Activated CD4-positive, alpha-beta memory T cell treated with anti-CD3 and anti-CD28 coated beads, Interleukin-2, amount 10 ng/mL, durations not matched to agents 7 days and 5 days (primary cell): ENCODE measurements at regions of chr2 and their contacts with region 1.

Region 1: GRCh38 chr2:64653349-64654062 is at the start of gene SERTAD2:
- DNase-seq: peak; percentile 87
- H3K4me3 Mint-ChIP-seq: peak within 1 kb of the TSS; percentile 91
- H3K27ac Mint-ChIP-seq: peak within 1 kb of the TSS; percentile 86
- H3K4me1 Mint-ChIP-seq: peaks cover 48% of the 10 kb centered on the region
- H3K27me3 Mint-ChIP-seq: peaks cover 11% of the 10 kb centered on the region
- total RNA-seq, gene SERTAD2: 16.2 to 17.5 TPM

Region 2: GRCh38 chr2:64598226-64598625 is 55.3 kb before region 1 on chr2:
- CTCF ChIA-PET with region 1: no interaction called
- POLR2A ChIA-PET with region 1: no interaction called
- DNase-seq: no peak
- H3K4me3 Mint-ChIP-seq: no peak overlapping the region
- H3K27ac Mint-ChIP-seq: no peak overlapping the region
- H3K4me1 Mint-ChIP-seq: peaks cover 9% of the 10 kb centered on the region
- H3K27me3 Mint-ChIP-seq: no peaks in the 10 kb centered on the region

Region 3: GRCh38 chr2:64609227-64609941 is 44.1 kb before region 1 on chr2:
- CTCF ChIA-PET with region 1: interaction called, 30 read pairs
- POLR2A ChIA-PET with region 1: interaction called, 32 read pairs
- DNase-seq: peak; percentile 73
- H3K4me3 Mint-ChIP-seq: peak overlapping the region; percentile 66
- H3K27ac Mint-ChIP-seq: no peak overlapping the region
- H3K4me1 Mint-ChIP-seq: peaks cover 29% of the 10 kb centered on the region
- H3K27me3 Mint-ChIP-seq: peaks cover 12% of the 10 kb centered on the region

Region 4: GRCh38 chr2:64695721-64696261 is 42.3 kb after region 1 on chr2:
- CTCF ChIA-PET with region 1: interaction called, 4 read pairs
- POLR2A ChIA-PET with region 1: interaction called, 15 read pairs
- DNase-seq: no peak
- H3K4me3 Mint-ChIP-seq: no peak overlapping the region
- H3K27ac Mint-ChIP-seq: no peak overlapping the region
- H3K4me1 Mint-ChIP-seq: peaks cover 50% of the 10 kb centered on the region
- H3K27me3 Mint-ChIP-seq: peaks cover 5% of the 10 kb centered on the region

Region 5: GRCh38 chr2:64737547-64737946 is 84.0 kb after region 1 on chr2:
- CTCF ChIA-PET with region 1: interaction called, 50 read pairs
- POLR2A ChIA-PET with region 1: interaction called, 12 read pairs
- DNase-seq: no peak
- H3K4me3 Mint-ChIP-seq: no peak overlapping the region
- H3K27ac Mint-ChIP-seq: peak overlapping the region; percentile 47
- H3K4me1 Mint-ChIP-seq: peaks cover 21% of the 10 kb centered on the region
- H3K27me3 Mint-ChIP-seq: peaks cover 2% of the 10 kb centered on the region

Region 6: DNA sequence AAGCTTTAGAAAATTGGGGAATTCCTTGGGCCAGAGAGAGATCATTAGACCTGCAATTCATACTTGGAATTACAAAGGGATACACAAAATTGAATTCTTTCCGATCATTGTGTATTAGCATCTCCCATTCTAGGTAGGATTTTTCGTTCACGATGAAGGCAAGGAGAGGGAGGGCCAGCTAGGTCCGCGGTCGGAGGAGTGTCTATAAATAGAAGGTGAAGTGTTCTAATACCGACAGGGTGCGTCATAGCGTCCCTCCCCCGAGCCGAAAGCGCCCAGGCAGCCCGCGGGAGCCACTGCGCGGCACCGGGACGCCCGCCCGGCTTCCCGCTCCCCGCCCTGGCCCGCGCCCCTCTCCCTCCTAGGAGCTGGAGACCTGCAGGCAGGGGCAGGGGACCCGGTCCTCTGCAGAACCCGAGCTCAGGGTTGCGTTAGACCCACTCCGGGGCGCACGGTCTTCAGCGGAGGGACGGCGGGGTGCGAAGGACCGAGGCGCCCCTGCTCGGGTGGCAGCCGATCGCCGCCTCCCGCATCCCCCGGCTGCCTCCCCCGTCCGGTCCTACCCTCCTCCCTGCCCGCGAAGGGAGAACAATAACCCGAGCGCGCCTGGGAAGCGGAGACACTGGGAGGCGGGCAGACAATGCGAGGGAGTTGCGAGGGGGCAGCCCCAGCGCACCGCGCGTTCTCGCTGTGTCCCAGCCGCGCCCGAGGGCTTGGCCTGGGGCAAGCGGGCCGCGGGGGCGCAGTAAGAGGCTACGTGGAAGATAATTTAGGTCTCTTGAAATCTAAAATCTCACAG is 114.4 kb after region 1 on chr2:
- CTCF ChIA-PET with region 1: interaction called, 4 read pairs
- POLR2A ChIA-PET with region 1: interaction called, 24 read pairs
- DNase-seq: peak; percentile 84
- H3K4me3 Mint-ChIP-seq: peak overlapping the region; percentile 80
- H3K27ac Mint-ChIP-seq: peak overlapping the region; percentile 79
- H3K4me1 Mint-ChIP-seq: peaks cover 23% of the 10 kb centered on the region
- H3K27me3 Mint-ChIP-seq: peaks cover 15% of the 10 kb centered on the region

Region 7: DNA sequence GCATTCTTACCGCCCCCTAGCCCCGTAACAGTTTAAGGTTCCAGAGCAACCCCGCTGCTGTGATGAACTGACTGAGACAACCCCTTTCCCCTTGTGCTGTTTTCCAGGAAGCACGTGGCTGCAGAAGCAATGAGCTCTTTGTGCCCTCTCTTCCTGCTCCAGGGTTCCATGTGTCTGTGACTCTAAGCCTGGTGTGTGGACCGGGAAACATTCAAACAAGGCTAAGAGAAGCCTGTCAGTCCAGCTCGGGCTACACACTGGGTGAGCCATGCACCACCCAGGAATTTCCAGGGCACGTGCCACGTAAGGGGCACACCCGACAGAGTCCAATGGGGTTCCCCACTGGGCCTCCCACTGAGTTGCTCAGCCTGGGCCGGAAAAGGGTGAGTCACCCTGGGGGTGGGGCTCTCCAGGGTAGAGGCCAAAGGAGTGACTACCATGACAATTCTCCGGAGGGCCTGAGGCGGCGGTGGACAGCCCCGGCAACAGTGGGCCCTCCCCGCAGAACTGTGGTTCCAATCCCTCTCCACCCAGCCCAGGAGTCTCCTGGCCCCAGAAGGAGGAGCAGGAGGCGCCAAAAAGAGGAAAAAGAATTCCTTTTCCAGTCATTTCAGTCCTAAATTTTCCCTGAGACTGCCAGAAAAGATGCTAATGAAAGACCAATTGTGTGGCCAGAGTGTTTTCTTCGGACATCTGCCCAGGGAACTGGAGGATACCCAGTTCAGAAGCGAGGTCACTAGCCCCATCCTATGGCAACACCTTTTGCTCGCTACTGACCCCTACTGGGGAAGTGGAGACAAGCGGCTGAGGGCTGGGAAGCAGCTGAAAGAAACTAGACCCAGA is 177.8 kb after region 1 on chr2:
- CTCF ChIA-PET with region 1: interaction called, 53 read pairs
- POLR2A ChIA-PET with region 1: interaction called, 19 read pairs
- DNase-seq: peak; percentile 85
- H3K4me3 Mint-ChIP-seq: peak overlapping the region; percentile 44
- H3K27ac Mint-ChIP-seq: peak overlapping the region; percentile 59
- H3K4me1 Mint-ChIP-seq: peaks cover 21% of the 10 kb centered on the region
- H3K27me3 Mint-ChIP-seq: peaks cover 7% of the 10 kb centered on the region